Activated naive CD4-positive, alpha-beta T cell treated with anti-CD3 and anti-CD28 coated beads, Interleukin-2, amount 10 ng/mL, durations not matched to agents 7 days and 5 days (primary cell): ENCODE measurements at regions of chr4 and their contacts with region 1.

Region 1: GRCh38 chr4:153344131-153345010 is at the start of gene MND1:
- DNase-seq: peak; percentile 94
- H3K4me3 Mint-ChIP-seq: peak within 1 kb of the TSS; percentile 90
- H3K27ac Mint-ChIP-seq: peak within 1 kb of the TSS; percentile 91
- H3K4me1 Mint-ChIP-seq: peaks cover 51% of the 10 kb centered on the region
- H3K27me3 Mint-ChIP-seq: peaks cover 20% of the 10 kb centered on the region

Region 2: DNA sequence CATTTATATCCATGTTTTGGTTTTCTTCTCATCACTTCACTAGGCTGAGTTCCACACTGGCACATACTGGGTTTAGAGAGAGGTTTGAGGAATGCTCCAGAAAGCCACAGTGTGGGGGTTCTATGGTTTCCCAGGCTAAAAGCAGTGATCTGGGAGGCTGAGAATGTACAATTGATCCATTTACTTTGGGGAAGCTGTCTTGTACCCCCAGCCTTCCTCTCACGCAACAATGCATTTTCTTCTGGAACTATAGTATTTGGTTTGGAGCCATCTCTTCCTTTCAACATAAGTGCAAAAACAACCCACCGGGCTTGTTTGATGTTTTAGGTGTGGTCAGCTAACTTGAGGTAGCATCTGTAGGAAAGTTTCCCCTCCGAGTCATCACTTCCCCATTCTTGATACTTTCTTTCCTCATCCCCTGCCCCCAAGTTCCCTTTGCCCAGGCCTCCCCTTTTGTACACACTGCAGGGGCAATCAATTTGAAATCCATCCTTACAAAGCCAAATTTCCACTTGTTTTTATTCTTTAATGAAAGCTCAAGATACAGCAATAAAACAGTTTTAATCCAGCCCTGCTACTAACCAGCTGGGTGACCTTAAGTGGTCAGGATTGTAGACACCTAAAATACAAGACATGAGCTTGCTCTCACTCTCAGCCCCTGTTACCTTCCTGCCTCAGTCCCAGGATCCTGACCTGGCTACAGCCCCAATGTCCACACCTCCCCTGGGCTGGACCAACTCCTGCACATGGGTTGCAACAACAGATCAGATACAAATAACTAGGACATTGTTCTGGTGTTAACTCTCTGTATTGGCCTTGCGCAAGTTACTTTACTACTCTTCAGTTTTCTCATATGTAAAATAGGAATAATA is 299.0 kb before region 1 on chr4:
- CTCF ChIA-PET with region 1: no interaction called
- DNase-seq: no peak
- H3K4me3 Mint-ChIP-seq: no peak overlapping the region
- H3K27ac Mint-ChIP-seq: no peak overlapping the region
- H3K4me1 Mint-ChIP-seq: peaks cover 6% of the 10 kb centered on the region
- H3K27me3 Mint-ChIP-seq: peaks cover 11% of the 10 kb centered on the region

Region 3: DNA sequence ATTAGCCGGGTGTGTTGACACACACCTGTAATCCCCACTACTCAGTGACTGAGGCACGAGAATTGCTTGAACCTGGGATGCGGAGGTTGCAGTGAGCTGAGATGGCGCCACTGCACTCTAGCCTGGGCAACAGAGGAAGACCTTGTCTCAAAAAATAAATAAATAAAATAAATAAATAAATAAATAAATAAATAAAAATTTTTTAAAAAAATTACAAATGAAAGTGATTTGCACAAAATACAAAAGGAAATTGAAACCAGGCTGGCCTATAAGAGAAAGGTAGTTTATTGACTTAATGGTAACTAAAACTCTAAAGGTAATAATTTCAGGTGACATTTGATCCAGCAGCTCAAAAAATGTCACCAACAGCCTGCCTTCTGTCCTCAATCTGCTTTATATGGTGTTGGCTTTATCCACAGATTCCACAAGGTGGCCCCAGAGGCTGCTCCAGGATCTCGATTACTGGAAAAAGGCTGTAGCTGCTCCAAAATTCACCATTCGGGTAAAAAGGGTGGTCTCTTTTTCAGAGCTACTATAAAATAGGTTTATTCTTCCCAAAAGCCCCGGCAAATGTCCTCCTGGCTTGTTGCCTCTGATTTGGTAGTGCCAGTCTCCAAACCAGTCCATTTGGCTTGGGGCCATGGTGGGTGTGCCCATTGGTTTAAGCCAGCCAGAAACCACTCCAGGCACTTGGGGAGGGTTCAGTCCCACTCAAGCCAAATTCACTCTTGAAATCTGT is 201.5 kb before region 1 on chr4:
- CTCF ChIA-PET with region 1: interaction called, 10 read pairs
- DNase-seq: peak; percentile 75
- H3K4me3 Mint-ChIP-seq: no peak overlapping the region
- H3K27ac Mint-ChIP-seq: no peak overlapping the region
- H3K4me1 Mint-ChIP-seq: no peaks in the 10 kb centered on the region
- H3K27me3 Mint-ChIP-seq: peaks cover 27% of the 10 kb centered on the region

Region 4: DNA sequence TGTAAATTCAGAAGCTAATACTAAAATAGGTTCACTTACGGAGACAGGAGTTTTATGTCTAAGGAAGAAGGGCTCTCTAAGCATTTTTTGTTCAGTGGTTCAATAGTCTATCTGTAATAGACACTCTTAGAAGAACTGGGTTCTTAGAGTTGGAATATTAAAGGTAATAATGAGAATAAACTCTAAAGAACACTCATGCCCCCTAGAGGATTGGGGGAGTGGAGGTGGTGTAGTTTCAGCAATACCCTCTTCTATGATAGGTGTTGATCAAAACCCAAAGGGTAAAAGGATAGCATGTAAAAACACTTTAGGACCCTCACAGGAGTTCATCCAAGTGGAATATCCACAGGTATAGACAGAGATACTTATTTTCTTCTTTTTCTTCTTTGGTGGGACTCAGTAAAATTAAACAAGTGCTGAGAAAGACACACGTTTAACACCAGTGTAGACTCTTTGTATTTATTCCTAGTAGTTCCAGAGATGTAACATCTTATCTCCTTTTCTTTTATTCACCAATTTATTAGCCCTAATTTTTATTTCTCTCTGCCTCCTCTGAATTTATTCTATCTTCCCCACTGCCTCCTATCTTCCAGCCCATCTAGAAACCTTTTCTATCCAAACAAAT is 25.6 kb before region 1 on chr4:
- CTCF ChIA-PET with region 1: no interaction called
- DNase-seq: peak; percentile 41
- H3K4me3 Mint-ChIP-seq: no peak overlapping the region
- H3K27ac Mint-ChIP-seq: no peak overlapping the region
- H3K4me1 Mint-ChIP-seq: no peaks in the 10 kb centered on the region
- H3K27me3 Mint-ChIP-seq: peaks cover 3% of the 10 kb centered on the region

Region 5: GRCh38 chr4:153466081-153466948 is 121.9 kb after region 1 on chr4 and contains the start of gene TMEM131L:
- CTCF ChIA-PET with region 1: interaction called, 28 read pairs
- DNase-seq: peak; percentile 75
- H3K4me3 Mint-ChIP-seq: peak within 1 kb of the TSS; percentile 96
- H3K27ac Mint-ChIP-seq: peak within 1 kb of the TSS; percentile 95
- H3K4me1 Mint-ChIP-seq: peaks cover 47% of the 10 kb centered on the region
- H3K27me3 Mint-ChIP-seq: peaks cover 4% of the 10 kb centered on the region

Region 6: DNA sequence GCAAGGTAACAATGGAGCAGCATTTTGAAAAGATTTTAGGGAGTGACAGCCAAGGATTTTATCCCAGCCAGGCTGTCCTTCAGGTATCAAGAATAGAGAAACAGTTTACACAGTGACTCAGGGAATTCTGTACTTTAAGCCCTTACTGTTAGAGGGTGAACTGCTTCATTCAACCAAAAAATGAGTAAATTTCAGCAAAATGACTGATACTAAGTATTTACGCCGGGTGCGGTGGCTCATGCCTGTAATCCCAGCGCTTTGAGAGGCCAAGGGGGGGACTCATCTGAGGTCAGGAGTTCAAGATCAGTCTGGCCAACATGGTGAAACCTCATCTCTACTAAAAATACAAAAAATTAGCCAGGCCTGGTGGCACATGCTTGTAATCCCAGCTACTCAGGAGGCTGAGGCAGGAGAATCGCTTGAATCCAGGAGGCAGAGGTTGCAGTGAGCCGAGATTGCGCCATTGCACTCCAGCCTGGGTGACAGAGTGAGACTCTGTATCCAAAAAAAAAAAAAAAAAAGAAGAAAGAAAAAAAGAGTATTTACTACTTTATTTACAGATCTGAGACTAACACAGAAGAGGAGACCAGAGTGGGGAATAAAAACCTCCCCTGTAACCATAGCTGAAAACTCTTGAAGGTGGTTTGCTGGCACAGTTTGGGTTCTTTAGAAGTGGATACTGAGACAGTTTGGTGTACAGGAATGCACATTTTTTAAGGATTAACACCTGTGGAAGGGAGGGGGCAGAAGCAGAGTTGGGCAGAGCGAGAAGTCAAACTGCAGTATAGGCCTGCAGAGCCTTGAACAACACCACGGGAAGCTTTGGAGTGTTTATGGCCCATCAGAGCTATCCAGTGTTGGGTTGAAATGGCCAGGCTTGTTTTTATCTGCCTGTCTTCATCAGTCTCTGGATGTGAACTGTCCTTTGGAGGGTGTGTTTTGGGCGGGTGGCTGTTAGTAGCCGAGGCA is 162.3 kb after region 1 on chr4:
- CTCF ChIA-PET with region 1: no interaction called
- DNase-seq: no peak
- H3K4me3 Mint-ChIP-seq: no peak overlapping the region
- H3K27ac Mint-ChIP-seq: no peak overlapping the region
- H3K4me1 Mint-ChIP-seq: peaks cover 34% of the 10 kb centered on the region
- H3K27me3 Mint-ChIP-seq: no peaks in the 10 kb centered on the region

Region 7: DNA sequence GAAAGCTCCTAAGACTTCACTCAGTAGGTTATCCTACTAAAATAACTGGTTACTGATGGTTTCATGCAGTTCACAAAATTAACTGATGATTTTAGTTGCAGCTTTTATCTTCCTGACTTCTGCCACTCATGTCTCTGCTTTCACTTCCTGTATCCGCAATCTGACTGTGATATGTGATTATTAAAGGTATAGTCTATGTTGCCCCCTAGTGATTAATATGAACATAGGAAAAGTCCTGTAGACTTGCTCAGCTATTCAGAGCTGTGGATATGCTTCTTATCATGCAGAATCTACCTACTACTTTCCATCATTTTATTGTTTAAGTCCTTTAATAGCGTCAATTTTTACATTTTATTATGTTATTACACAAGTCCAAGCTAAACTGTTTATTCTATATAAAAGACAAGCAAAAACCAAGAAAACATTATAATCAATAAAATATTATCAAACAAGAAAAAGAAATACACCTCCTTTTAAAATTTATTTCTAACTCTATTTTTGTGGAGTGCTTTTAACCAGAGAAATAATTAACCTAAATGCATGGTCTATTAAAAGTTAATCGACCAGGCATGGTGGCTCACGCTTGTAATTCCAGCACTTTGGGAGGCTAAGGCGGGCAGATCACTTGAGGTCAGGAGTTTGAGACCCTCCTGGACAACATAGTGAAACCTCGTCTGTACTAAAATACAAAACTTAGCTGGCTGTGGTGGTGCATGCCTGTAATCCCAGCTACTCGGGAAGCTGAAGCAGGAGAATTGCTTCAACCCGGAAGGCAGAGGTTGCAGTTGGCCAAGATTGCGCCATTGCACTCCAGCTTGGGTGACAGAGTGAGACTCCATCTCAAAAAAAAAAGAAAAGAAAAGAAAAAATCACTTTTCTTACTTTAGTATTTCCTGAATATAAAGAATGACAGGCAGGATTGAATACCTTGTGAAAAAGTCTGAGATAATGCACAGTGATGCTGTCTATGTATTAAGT is 299.3 kb after region 1 on chr4:
- CTCF ChIA-PET with region 1: interaction called, 20 read pairs
- DNase-seq: no peak
- H3K4me3 Mint-ChIP-seq: no peak overlapping the region
- H3K27ac Mint-ChIP-seq: no peak overlapping the region
- H3K4me1 Mint-ChIP-seq: peaks cover 19% of the 10 kb centered on the region
- H3K27me3 Mint-ChIP-seq: no peaks in the 10 kb centered on the region

Region 8: GRCh38 chr4:153649572-153649991 is 305.2 kb after region 1 on chr4:
- CTCF ChIA-PET with region 1: interaction called, 20 read pairs
- DNase-seq: no peak
- H3K4me3 Mint-ChIP-seq: no peak overlapping the region
- H3K27ac Mint-ChIP-seq: no peak overlapping the region
- H3K4me1 Mint-ChIP-seq: peaks cover 38% of the 10 kb centered on the region
- H3K27me3 Mint-ChIP-seq: no peaks in the 10 kb centered on the region